Thyroid gland (tissue), 4 donors: ENCODE measurements at regions of chr9 and their contacts with region 1.

Region 1: GRCh38 chr9:32526041-32526706 is at the start of gene RIGI:
- DNase-seq: peak; percentile 95 to 96
- H3K4me3 ChIP-seq: peak within 1 kb of the TSS; percentile 32 to 35 (median 32)
- H3K27ac ChIP-seq: peak within 1 kb of the TSS; percentile 66 to 95 (median 78)
- H3K4me1 ChIP-seq: peaks cover 0 to 23% of the 10 kb centered on the region in 2 donors
- H3K27me3 ChIP-seq: no peaks in the 10 kb centered on the region
- CTCF ChIP-seq: peak in 5 of 6 experiments; percentile 35 to 88 (median 56)
- POLR2A ChIP-seq: peak in 1 of 2 donors; percentile 84
- total RNA-seq, gene RIGI: 7.9 to 10.3 (median 10.2) TPM

Region 2: GRCh38 chr9:32378993-32379729 is 147.0 kb before region 1 on chr9:
- intact Hi-C with region 1: loop called (anchors 5 kb)
- DNase-seq: peak in 1 of 2 donors; percentile 30
- H3K4me3 ChIP-seq: no peak overlapping the region
- H3K27ac ChIP-seq: no peak overlapping the region
- H3K4me1 ChIP-seq: no peaks in the 10 kb centered on the region
- H3K27me3 ChIP-seq: no peaks in the 10 kb centered on the region
- CTCF ChIP-seq: peak in 4 of 6 experiments; percentile 71 to 96 (median 90)
- POLR2A ChIP-seq: no peak

Region 3: DNA sequence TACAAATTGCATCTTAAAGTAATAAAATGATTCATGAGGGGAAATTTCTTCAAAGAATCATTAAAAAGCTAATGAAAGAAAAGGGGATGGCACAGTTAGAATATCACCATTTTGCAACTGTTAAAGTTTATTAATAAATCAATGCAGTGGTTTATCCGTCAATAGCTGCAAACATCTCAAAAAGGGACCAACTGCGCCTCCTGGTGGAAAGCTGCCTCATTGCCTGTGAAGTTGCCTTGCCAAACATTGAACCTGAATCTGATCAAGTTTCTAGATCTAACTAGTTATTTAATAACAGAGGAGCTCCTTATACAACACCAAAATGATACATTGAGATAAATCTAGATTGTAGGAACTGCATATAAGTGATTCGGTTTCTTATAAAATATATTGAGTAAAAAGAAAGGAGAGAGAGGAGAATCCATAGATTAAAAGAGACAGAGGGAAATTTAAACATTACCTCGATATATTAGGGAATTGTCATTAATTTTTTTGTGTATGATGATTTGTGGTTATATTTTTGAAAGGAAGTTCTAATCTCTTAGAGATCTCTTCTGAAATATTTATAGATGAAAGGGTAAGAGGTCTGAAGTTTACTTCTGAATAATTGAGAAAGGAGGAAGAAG is 53.6 kb after region 1 on chr9:
- intact Hi-C with region 1: loop called (anchors 5 kb)
- DNase-seq: peak; percentile 62 to 69
- H3K4me3 ChIP-seq: no peak overlapping the region
- H3K27ac ChIP-seq: no peak overlapping the region
- H3K4me1 ChIP-seq: no peaks in the 10 kb centered on the region
- H3K27me3 ChIP-seq: no peaks in the 10 kb centered on the region
- CTCF ChIP-seq: peak; percentile 39 to 86 (median 76)
- POLR2A ChIP-seq: no peak